ENCODE measurements at regions of chr16 and their contacts with region 1.

Region 1: DNA sequence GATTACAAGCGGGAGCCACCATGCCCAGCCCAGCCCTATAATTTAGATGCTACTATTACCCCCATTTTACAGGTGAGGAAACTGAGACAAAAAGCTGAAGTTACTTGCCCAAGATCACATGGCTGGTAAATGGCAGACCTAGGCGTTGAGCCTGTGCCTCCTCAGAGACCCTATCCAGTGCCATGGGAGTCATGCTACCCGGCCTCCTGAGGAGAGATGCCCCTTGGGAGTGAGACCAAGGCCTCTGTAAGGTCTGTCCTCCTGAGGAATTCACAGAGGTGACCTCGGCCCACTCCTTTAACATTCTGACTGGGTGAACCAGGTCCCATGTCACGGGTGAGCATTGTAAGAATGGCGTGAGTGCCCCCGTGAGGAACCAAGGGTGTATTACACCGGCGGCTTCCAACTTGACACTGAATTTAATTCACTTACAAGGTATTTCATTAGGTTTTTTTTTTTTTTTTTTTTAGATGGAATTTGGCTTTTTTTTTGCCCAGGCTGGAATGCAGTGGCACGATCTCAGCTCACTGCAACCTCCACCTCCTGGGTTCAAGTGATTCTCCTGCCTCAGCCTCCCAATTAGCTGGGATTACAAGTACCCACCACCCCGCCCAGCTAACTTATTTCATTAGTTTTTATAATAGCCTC is 95.7 kb downstream of the ABCC6 start:
- DNase-seq: peak in 2 of 3 donors; percentile 61 to 68
- ATAC-seq: peak; percentile 92 to 97 (median 95)
- H3K4me3 ChIP-seq: no peak overlapping the region
- H3K27ac ChIP-seq: no peak overlapping the region
- H3K4me1 ChIP-seq: no peaks in the 10 kb centered on the region
- H3K27me3 ChIP-seq: no peaks in the 10 kb centered on the region
- CTCF ChIP-seq: peak; percentile 80 to 86 (median 82)
- POLR2A ChIP-seq: no peak

Region 2: GRCh38 chr16:15777533-15778203 is 349.9 kb before region 1 on chr16:
- intact Hi-C with region 1: loop called in 1 of 2 experiments (anchors 10 kb)
- DNase-seq: no peak
- ATAC-seq: no peak
- H3K4me3 ChIP-seq: no peak overlapping the region
- H3K27ac ChIP-seq: no peak overlapping the region
- H3K4me1 ChIP-seq: no peaks in the 10 kb centered on the region
- H3K27me3 ChIP-seq: no peaks in the 10 kb centered on the region
- CTCF ChIP-seq: no peak
- POLR2A ChIP-seq: no peak

Region 3: GRCh38 chr16:15865742-15866141 is 261.9 kb before region 1 on chr16:
- intact Hi-C with region 1: loop called (anchors 10 kb)
- DNase-seq: no peak
- ATAC-seq: no peak
- H3K4me3 ChIP-seq: no peak overlapping the region
- H3K27ac ChIP-seq: no peak overlapping the region
- H3K4me1 ChIP-seq: no peaks in the 10 kb centered on the region
- H3K27me3 ChIP-seq: no peaks in the 10 kb centered on the region
- CTCF ChIP-seq: no peak
- POLR2A ChIP-seq: no peak

Region 4: DNA sequence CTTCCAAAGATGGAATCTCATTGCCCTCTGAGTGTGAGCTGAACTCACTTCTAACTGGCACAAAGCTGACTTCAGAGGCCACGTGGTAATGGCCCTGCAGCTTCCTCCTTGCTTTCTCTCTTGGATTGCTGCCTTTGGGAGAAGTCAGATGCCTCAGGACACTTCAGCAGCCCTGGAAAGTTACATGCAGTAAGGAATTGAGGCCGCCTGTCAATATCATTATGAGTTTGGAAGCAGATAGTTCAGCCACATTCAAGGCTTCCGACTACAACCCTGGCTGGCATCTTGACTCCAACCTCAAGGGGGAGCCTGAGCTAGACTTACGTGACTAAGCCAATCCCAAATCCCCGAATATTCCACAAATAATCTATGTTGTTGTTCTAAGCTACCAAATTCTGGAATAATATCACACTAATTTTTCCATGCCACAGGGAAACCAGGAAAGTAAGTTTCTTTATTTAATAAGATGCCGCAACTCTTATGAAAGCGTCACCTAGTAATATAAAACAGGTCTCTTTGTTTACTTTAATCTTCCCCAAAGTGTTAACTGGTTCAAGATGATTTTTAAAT is 252.8 kb before region 1 on chr16:
- intact Hi-C with region 1: loop called in 1 of 2 experiments (anchors 10 kb)
- DNase-seq: peak in 1 of 3 donors; percentile 30
- ATAC-seq: peak; percentile 76 to 86 (median 80)
- H3K4me3 ChIP-seq: no peak overlapping the region
- H3K27ac ChIP-seq: no peak overlapping the region
- H3K4me1 ChIP-seq: peaks cover 0 to 24% (median 0%) of the 10 kb centered on the region in 4 donors
- H3K27me3 ChIP-seq: no peaks in the 10 kb centered on the region
- CTCF ChIP-seq: peak; percentile 48 to 64 (median 56)
- POLR2A ChIP-seq: no peak